AG04449 (cell line): ENCODE measurements at regions of chr1 and their contacts with region 1.

Region 1: GRCh38 chr1:243748706-243749283 is 101.2 kb downstream of the AKT3 start:
- DNase-seq: peak; percentile 45
- H3K4me3 ChIP-seq: no peak overlapping the region
- CTCF ChIP-seq: peak; percentile 66

Region 2: DNA sequence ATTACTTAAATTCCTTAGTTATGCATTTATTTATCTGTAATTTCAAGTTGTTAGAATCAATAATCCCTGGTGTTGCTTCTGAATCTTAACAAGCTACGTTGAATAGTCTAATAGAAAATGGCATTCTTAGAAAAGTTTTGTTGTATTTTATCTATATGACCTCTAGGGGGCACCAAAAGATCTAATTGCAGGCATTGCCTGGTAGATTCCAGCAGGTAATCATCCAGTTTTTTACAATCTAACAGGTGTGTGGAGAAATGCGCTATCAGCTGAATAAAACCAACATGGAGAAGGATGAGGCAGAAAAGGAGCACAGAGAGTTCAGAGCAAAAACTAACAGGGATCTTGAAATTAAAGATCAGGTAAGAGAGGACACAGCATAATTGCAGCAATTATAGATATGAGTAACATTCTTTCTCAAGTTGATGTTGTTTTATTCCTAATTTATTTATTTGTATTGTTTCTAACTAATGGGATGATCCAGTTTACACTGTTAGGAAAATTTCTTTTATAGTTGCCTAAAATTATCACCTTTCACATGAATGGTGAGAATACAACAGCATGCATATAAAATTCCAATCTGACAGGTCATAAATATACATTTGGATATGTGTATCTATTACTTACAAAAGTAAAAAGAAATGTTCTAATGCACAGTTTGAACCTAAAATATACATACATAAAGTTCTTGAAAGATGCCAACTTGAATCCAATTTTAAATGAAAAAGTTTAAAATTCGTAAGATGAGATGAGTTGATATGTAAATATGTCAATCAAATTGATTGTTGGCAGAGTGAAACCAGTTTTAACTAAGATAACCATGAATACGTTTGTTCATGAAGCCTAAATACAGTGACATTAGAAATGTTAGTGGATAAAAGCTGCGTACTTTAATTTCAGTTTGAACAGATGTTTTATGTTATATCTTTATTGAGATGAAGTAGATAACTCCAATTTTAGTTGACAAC is 404.5 kb before region 1 on chr1:
- CTCF ChIA-PET with region 1: interaction called, 12 read pairs
- POLR2A ChIA-PET with region 1: no interaction called
- DNase-seq: no peak
- H3K4me3 ChIP-seq: no peak overlapping the region
- CTCF ChIP-seq: peak; percentile 30

Region 3: GRCh38 chr1:243763806-243764205 is 15.0 kb after region 1 on chr1:
- CTCF ChIA-PET with region 1: interaction called, 60 read pairs
- POLR2A ChIA-PET with region 1: no interaction called
- DNase-seq: no peak
- H3K4me3 ChIP-seq: no peak overlapping the region
- CTCF ChIP-seq: no peak